Activated CD4-positive, alpha-beta T cell treated with anti-CD3 and anti-CD28 coated beads, Interleukin-2, amount 10 ng/mL, durations not matched to agents 24 days and 14 days (primary cell): ENCODE measurements at regions of chr1 and their contacts with region 1.

Region 1: DNA sequence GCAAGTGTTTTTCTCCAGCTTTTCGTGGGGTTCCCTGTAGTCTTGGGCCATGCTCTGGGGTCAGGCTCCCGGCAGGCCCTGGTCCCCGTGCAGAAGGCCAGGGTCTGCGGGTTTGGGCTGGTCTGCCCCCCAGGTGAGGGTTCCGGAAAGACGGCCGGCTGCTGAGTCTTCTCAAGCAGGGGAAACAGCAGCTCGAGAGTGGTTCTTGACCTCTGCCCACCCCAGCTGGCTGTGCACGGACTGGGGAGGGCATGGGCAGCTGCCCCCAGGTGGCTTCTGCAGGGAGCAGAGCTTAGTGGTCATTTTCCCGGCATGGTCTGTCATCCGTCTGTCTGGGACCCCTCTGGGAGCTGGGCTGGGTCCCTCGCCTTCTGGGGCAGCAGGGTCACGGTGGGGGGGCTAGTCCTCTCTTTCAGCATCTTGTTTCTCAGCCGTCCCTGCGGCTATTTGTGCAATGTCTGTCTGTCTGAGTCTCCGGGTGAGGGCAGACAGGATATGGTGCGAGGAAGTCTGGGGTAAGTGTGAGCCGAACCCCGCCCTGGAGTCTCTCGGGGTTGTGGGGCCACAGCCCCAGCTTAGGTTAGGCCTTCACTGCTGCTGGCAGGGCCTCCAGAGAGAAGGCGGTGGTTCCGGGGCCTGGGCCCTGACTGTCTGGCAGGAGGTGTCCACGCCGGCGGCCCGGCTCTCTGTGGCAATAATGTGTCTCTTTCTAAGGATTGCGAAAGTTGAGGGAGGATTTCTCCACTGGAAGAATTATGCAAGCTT is 6.1 kb downstream of the SKI start:
- DNase-seq: peak; percentile 91
- H3K4me3 Mint-ChIP-seq: peak overlapping the region; percentile 93
- H3K27ac Mint-ChIP-seq: peak overlapping the region; percentile 88
- H3K4me1 Mint-ChIP-seq: peaks cover 62% of the 10 kb centered on the region
- H3K27me3 Mint-ChIP-seq: no peaks in the 10 kb centered on the region

Region 2: DNA sequence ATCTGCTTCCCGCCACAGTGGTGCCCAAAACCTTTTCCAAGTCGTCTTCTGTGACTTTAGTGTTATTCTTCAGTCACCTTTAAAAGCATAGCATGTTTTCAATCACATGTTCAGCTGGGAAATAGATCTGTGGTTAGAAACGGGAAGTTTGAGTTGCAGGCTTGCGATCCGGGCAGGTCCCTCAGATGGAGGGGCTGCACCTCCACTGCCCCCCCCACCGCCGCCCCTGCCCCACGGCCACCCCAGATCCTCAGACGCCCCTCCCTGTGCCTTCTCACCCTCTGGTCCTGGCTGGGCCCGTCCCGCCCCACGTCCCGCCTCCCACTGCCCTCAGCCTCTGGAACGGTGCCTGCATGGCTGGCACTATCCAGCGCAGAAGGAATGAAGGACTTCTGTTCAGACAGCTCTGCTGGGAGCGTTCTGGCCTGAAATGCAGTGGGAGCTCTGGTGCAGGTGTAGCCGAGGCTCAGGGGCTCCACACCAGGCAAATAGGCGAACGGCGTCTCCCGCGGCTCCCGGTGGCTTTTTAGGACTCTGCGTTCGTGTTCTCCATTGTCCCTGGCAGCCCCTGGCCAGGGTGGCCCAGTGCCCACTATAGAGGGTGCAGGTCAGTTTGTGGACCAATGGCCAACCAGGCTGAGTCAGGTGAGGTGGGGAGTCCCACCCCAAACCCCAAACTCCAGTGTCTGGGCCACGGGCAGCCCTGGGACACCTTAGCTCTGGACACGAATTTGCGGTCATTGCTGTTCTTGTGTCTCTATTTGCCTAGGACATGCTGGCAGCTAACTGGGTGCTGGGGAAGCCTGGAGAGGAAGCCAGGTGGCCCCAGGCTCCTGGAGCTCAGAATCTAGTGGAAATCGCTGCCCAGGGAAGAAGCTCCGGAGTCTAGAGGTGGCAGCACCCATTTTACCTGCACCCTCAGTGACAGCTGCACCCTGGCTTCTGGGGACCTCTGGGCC is 106.7 kb before region 1 on chr1:
- intact Hi-C with region 1: loop called (anchors 2 kb)
- DNase-seq: no peak
- H3K4me3 Mint-ChIP-seq: peak overlapping the region; percentile 70
- H3K27ac Mint-ChIP-seq: no peak overlapping the region
- H3K4me1 Mint-ChIP-seq: peaks cover 4% of the 10 kb centered on the region
- H3K27me3 Mint-ChIP-seq: no peaks in the 10 kb centered on the region

Region 3: GRCh38 chr1:2255420-2256369 is 21.5 kb after region 1 on chr1:
- intact Hi-C with region 1: loop called (anchors 1 kb)
- DNase-seq: peak; percentile 94
- H3K4me3 Mint-ChIP-seq: no peak overlapping the region
- H3K27ac Mint-ChIP-seq: no peak overlapping the region
- H3K4me1 Mint-ChIP-seq: peaks cover 33% of the 10 kb centered on the region
- H3K27me3 Mint-ChIP-seq: no peaks in the 10 kb centered on the region

Region 4: GRCh38 chr1:2290595-2291510 is 56.7 kb after region 1 on chr1:
- intact Hi-C with region 1: loop called (anchors 2 kb)
- DNase-seq: peak; percentile 94
- H3K4me3 Mint-ChIP-seq: peak overlapping the region; percentile 86
- H3K27ac Mint-ChIP-seq: peak overlapping the region; percentile 95
- H3K4me1 Mint-ChIP-seq: peaks cover 67% of the 10 kb centered on the region
- H3K27me3 Mint-ChIP-seq: no peaks in the 10 kb centered on the region